Dorsolateral prefrontal cortex (tissue), 120 donors: ENCODE measurements at regions of chrX and their contacts with region 1.

Region 1: GRCh38 chrX:46733226-46733625 is 25.7 kb downstream of the SLC9A7 start:
- DNase-seq: no peak
- H3K4me3 ChIP-seq: no peak overlapping the region
- H3K27ac ChIP-seq: no peak overlapping the region
- H3K27me3 ChIP-seq: peaks cover 0 to 15% (median 0%) of the 10 kb centered on the region in 45 donors
- CTCF ChIP-seq: no peak

Region 2: GRCh38 chrX:46678232-46678631 is 55.0 kb before region 1 on chrX:
- intact Hi-C with region 1: loop called in 1 of 2 experiments (anchors 2 kb)
- DNase-seq: no peak
- H3K4me3 ChIP-seq: no peak overlapping the region
- H3K27ac ChIP-seq: no peak overlapping the region
- H3K27me3 ChIP-seq: peaks cover 0 to 59% (median 14%) of the 10 kb centered on the region in 45 donors
- CTCF ChIP-seq: no peak

Region 3: DNA sequence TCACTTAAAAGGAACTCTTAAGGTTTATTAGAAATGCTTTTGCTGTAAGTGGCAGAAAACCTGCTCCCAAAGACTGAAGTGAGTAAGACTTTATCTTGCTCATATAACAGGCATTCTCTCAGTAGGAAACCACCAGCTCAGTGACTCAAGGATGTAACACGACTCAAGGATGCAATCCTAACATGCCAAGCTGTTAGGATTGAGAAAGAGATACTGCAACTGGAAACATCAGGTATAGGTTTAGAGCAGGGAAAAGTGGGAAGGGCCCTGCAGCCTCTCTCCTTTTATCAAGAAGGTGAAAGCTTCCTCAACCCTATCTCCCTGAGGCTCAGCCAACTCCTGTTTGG is 37.6 kb after region 1 on chrX:
- intact Hi-C with region 1: no loop called
- DNase-seq: no peak
- H3K4me3 ChIP-seq: no peak overlapping the region
- H3K27ac ChIP-seq: peak overlapping the region in 1 of 59 donors; percentile 11
- H3K27me3 ChIP-seq: peaks cover 0 to 59% (median 15%) of the 10 kb centered on the region in 45 donors
- CTCF ChIP-seq: no peak